ENCODE measurements at regions of chr9 and their contacts with region 1.

Region 1: DNA sequence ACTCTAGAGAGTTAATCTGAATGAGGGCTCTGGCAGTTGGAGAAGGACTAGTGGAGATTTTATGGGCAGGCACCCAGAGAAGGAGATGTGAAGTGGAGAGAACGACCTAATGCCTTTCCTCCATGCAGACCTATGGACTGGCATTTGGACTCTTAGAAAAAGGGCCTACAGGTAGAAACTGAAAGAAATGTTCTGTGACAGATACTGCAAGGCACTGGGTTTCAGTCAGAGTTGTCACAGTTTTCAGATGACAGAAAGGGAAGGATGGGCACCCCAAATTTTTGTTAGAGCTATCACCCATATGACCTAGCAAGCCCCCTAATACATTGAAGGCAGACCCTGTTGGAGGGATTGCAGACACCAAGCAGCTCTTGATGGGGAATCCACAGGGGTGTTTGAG is 406.8 kb downstream of the CCDC171 start:
- DNase-seq: no peak
- ATAC-seq: no peak
- H3K4me3 Mint-ChIP-seq: no peak overlapping the region
- H3K27ac Mint-ChIP-seq: no peak overlapping the region
- H3K4me1 Mint-ChIP-seq: no peaks in the 10 kb centered on the region
- H3K27me3 Mint-ChIP-seq: no peaks in the 10 kb centered on the region

Region 2: DNA sequence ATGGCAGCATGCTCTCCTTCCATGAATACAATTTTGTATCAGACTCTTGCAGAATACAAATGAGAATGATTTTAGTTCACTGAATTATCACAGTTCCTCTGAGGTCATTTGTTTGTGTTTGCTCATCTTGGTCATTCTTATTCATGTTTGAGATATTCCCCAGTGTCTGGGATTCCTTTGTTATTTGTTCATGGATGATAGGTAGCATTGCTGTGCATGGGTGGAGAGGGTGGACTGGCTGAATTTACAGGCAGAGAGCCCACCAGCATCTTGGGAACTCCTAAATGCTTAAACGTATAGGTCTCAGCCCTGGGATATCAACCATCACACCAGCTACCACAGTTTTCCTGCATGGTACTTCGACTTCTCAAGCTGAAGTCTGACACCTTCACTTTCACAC is 53.0 kb after region 1 on chr9:
- CTCF ChIA-PET with region 1: interaction called, 4 read pairs
- POLR2A ChIA-PET with region 1: no interaction called
- intact Hi-C with region 1: loop called in 1 of 2 experiments (anchors 10 kb)
- DNase-seq: no peak
- ATAC-seq: no peak
- H3K4me3 Mint-ChIP-seq: no peak overlapping the region
- H3K27ac Mint-ChIP-seq: no peak overlapping the region
- H3K4me1 Mint-ChIP-seq: no peaks in the 10 kb centered on the region
- H3K27me3 Mint-ChIP-seq: no peaks in the 10 kb centered on the region

Measured in activated CD4-positive, alpha-beta T cell treated with anti-CD3 and anti-CD28 coated beads for 36 hours (primary cell).